AG04449 (cell line): ENCODE measurements at regions of chr2 and their contacts with region 1.

Region 1: GRCh38 chr2:42974721-42975717 is 182.6 kb upstream of the HAAO start:
- DNase-seq: no peak
- H3K4me3 ChIP-seq: peak overlapping the region; percentile 48
- CTCF ChIP-seq: peak; percentile 99

Region 2: GRCh38 chr2:42964439-42965083 is 10.5 kb before region 1 on chr2:
- CTCF ChIA-PET with region 1: interaction called, 17 read pairs
- POLR2A ChIA-PET with region 1: no interaction called
- DNase-seq: peak; percentile 81
- H3K4me3 ChIP-seq: no peak overlapping the region
- CTCF ChIP-seq: no peak

Region 3: DNA sequence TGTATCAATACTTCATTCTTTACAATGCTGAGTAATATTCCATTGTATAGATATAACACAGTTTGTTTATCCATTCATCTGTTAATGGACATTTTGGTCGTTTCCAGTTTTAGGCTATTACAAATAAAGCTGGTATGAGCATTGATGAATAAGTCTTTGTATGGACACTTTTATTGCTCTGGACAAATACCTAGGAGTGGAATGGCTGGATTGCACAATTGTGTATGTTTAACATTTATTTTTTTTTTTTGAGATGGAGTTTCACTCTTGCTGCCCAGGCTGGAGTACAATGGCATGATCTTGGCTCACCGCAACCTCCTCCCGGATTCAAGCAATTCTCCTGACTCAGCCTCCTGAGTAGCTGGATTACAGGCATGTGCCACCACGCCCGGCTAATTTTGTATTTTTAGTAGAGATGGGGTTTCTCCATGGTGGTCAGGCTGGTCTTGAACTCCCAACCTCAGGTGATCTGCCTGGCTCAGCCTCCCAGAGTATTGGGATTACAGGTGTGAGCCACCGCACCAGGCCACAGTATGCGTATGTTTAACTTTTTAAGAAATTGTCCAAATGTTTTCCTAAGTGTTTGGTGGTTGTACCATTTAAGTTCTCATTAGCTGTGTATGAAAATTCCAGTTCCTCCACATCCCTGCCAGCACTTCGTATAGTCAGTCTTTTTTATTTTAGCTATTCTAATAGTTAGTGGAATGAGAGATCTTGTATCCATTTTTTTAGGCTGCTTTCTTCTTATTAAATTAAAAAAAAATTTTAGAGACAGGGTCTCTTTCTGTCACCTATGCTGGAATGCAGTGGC is 12.3 kb after region 1 on chr2:
- CTCF ChIA-PET with region 1: interaction called, 55 read pairs
- POLR2A ChIA-PET with region 1: no interaction called
- DNase-seq: peak; percentile 62
- H3K4me3 ChIP-seq: no peak overlapping the region
- CTCF ChIP-seq: no peak

Region 4: DNA sequence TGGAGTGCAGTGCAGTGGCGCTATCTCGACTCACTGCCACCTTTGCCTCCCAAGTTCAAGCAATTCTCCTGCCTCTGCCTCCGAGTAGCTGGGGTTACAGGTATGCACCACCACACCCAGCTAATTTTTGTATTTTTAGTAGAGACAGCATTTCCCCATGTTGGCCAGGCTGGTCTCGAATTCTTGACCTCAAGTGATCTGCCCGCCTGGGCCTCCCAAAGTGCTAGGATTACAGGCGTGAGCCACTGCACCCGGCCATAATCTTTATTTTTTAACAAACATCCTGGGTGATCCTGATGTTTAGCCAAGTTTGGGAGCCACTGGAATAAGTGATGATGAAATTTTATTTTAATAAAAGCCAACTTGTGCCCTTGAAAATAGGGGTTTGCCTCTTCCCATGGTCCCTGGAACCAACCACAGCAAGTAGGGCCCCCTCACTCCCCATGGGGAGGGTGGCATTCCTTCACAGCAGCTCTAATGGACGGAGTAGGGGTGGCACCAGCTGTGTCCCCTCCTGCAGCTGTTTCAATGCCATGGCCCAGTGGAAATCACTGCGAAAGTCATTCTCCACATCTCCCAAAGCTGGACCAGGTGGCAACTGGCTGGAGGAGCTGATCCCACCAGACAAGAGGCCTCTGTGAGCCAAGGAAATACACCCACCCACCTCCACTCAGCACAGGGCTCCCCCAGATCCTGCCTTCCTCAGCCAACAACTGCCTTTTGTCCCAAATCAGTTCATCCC is 56.6 kb after region 1 on chr2:
- CTCF ChIA-PET with region 1: no interaction called
- POLR2A ChIA-PET with region 1: no interaction called
- DNase-seq: no peak
- H3K4me3 ChIP-seq: no peak overlapping the region
- CTCF ChIP-seq: no peak